GM12878 (cell line): ENCODE measurements at regions of chr4 and their contacts with region 1.

Region 1: GRCh38 chr4:4524364-4524763 is 17.5 kb downstream of the STX18 start:
- DNase-seq: peak; percentile 76
- ATAC-seq: peak; percentile 98
- H3K4me3 ChIP-seq: peak overlapping the region; percentile 42
- H3K27ac ChIP-seq: peak overlapping the region; percentile 76
- H3K4me1 ChIP-seq: peaks cover 30% of the 10 kb centered on the region
- H3K27me3 ChIP-seq: no peaks in the 10 kb centered on the region
- CTCF ChIP-seq: peak; percentile 37 to 44 (median 43); a peak in 5 of 6 replicates
- EP300 ChIP-seq: peak in 1 of 2 experiments; percentile 59; a peak in 1 of 4 replicates
- POLR2A ChIP-seq: no peak
- RAD21 ChIP-seq: peak; percentile 28; the same call in 1 of the 2 replicates

Region 2: GRCh38 chr4:4344915-4345527 is 179.3 kb before region 1 on chr4:
- CTCF ChIA-PET with region 1: no interaction called
- POLR2A ChIA-PET with region 1: no interaction called
- RAD21 ChIA-PET with region 1: no interaction called
- SMC1A ChIA-PET with region 1: no interaction called
- in situ Hi-C with region 1: no loop called
- intact Hi-C with region 1: no loop called
- DNase-seq: peak; percentile 49
- ATAC-seq: peak; percentile 91
- H3K4me3 ChIP-seq: no peak overlapping the region
- H3K27ac ChIP-seq: no peak overlapping the region
- H3K4me1 ChIP-seq: peaks cover 15% of the 10 kb centered on the region
- H3K27me3 ChIP-seq: no peaks in the 10 kb centered on the region
- CTCF ChIP-seq: no peak
- EP300 ChIP-seq: peak in 1 of 2 experiments; percentile 59; a peak in 2 of 4 replicates
- POLR2A ChIP-seq: no peak
- RAD21 ChIP-seq: no peak

Region 3: GRCh38 chr4:4502694-4503311 is 21.6 kb before region 1 on chr4:
- CTCF ChIA-PET with region 1: interaction called, 32 read pairs
- POLR2A ChIA-PET with region 1: interaction called, 9 read pairs
- RAD21 ChIA-PET with region 1: interaction called, 18 read pairs
- SMC1A ChIA-PET with region 1: interaction called, 31 read pairs
- in situ Hi-C with region 1: no loop called
- intact Hi-C with region 1: no loop called
- DNase-seq: no peak
- ATAC-seq: peak; percentile 90
- H3K4me3 ChIP-seq: peak overlapping the region; percentile 52
- H3K27ac ChIP-seq: peak overlapping the region; percentile 80
- H3K4me1 ChIP-seq: peaks cover 9% of the 10 kb centered on the region
- H3K27me3 ChIP-seq: no peaks in the 10 kb centered on the region
- CTCF ChIP-seq: no peak
- EP300 ChIP-seq: no peak
- POLR2A ChIP-seq: no peak; the same call in 1 of the 2 replicates
- RAD21 ChIP-seq: no peak

Region 4: GRCh38 chr4:4507923-4508322 is 16.4 kb before region 1 on chr4:
- CTCF ChIA-PET with region 1: interaction called, 32 read pairs
- POLR2A ChIA-PET with region 1: interaction called, 9 read pairs
- RAD21 ChIA-PET with region 1: interaction called, 18 read pairs
- SMC1A ChIA-PET with region 1: interaction called, 31 read pairs
- in situ Hi-C with region 1: no loop called
- intact Hi-C with region 1: no loop called
- DNase-seq: no peak
- ATAC-seq: peak; percentile 83
- H3K4me3 ChIP-seq: no peak overlapping the region
- H3K27ac ChIP-seq: no peak overlapping the region
- H3K4me1 ChIP-seq: peaks cover 3% of the 10 kb centered on the region; the same call in 1 of the 2 replicates
- H3K27me3 ChIP-seq: no peaks in the 10 kb centered on the region
- CTCF ChIP-seq: peak; percentile 37 to 56 (median 52); a peak in 5 of 6 replicates
- EP300 ChIP-seq: no peak
- POLR2A ChIP-seq: no peak
- RAD21 ChIP-seq: peak; percentile 28; the same call in 1 of the 2 replicates

Region 5: DNA sequence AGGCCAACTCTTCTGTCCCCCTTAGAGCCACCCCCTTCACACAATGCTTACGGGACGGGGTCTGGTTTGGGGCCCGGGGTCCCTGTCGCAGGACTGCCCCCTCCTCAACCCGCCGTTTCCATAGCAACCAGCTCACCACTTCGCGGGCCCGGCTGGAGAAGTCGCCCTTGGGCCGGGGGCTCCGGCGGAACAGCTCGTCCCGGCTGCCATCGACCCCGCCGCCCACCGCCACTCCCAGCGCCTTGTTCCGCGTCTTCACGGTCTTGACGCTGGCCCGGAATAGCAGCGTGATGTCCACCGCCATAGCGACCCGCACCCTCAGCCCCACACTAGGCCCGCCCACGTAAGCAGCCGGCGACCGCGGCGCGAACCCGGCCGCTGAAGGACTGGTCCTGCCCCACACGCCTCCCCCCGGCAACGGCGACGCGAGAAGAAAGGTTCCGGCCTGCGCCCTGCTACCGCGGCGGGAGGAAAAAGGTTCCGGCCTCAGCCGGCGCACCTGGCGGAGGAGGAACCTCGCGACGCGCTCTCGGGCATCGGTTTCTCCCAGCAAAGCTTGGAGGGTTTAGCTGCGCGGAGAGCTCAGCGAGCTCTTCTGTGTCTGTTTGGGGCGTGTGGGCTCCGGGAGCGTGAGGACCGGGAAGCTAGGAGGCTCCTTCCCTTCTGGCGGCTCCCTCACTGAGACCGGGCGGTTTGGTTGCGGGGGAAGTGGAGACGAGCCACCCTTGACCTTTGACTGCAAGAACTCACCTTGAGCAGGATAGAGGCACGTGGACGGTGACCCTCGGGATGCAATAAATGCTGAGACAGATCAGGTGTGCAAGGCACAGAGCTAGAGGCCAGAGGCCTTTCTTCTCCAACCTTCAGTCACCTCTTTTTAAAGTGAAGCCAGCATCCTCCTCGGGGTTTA is 17.6 kb after region 1 on chr4 and contains the start of gene STX18:
- CTCF ChIA-PET with region 1: interaction called, 134 read pairs
- POLR2A ChIA-PET with region 1: interaction called, 15 read pairs
- RAD21 ChIA-PET with region 1: interaction called, 47 read pairs
- SMC1A ChIA-PET with region 1: interaction called, 175 read pairs
- in situ Hi-C with region 1: no loop called
- intact Hi-C with region 1: no loop called
- DNase-seq: peak; percentile 48
- ATAC-seq: peak; percentile 92
- H3K4me3 ChIP-seq: peak within 1 kb of the TSS; percentile 80
- H3K27ac ChIP-seq: peak within 1 kb of the TSS; percentile 92
- H3K4me1 ChIP-seq: 0 out of 2 replicates have a peak, but pooled peaks cover 2% of the 10 kb centered on the region
- H3K27me3 ChIP-seq: no peaks in the 10 kb centered on the region
- CTCF ChIP-seq: no peak
- EP300 ChIP-seq: peak; percentile 43 to 45; a peak in 1 of 4 replicates
- POLR2A ChIP-seq: peak; percentile 96
- RAD21 ChIP-seq: 0 out of 2 replicates have a peak, but pooled peaks have one; percentile 13
- polyA plus RNA-seq, gene STX18: 8.2 to 13.6 TPM

Region 6: GRCh38 chr4:4575273-4576211 is 51.2 kb after region 1 on chr4:
- CTCF ChIA-PET with region 1: interaction called, 3 read pairs
- POLR2A ChIA-PET with region 1: no interaction called
- RAD21 ChIA-PET with region 1: no interaction called
- SMC1A ChIA-PET with region 1: interaction called, 10 read pairs
- in situ Hi-C with region 1: no loop called
- intact Hi-C with region 1: no loop called
- DNase-seq: peak; percentile 9
- ATAC-seq: peak; percentile 94
- H3K4me3 ChIP-seq: peak overlapping the region; percentile 76
- H3K27ac ChIP-seq: peak overlapping the region; percentile 24
- H3K4me1 ChIP-seq: peaks cover 5% of the 10 kb centered on the region
- H3K27me3 ChIP-seq: no peaks in the 10 kb centered on the region
- CTCF ChIP-seq: peak; percentile 25 to 41 (median 27); a peak in 2 of 6 replicates
- EP300 ChIP-seq: no peak
- POLR2A ChIP-seq: peak; percentile 61
- RAD21 ChIP-seq: 0 out of 2 replicates have a peak, but pooled peaks have one; percentile 19

Region 7: GRCh38 chr4:4697383-4698103 is 173.2 kb after region 1 on chr4:
- CTCF ChIA-PET with region 1: no interaction called
- POLR2A ChIA-PET with region 1: no interaction called
- RAD21 ChIA-PET with region 1: no interaction called
- SMC1A ChIA-PET with region 1: no interaction called
- in situ Hi-C with region 1: no loop called
- intact Hi-C with region 1: no loop called
- DNase-seq: no peak
- ATAC-seq: no peak
- H3K4me3 ChIP-seq: no peak overlapping the region
- H3K27ac ChIP-seq: no peak overlapping the region
- H3K4me1 ChIP-seq: 0 out of 2 replicates have a peak, but pooled peaks cover 3% of the 10 kb centered on the region
- H3K27me3 ChIP-seq: no peaks in the 10 kb centered on the region
- CTCF ChIP-seq: no peak
- EP300 ChIP-seq: no peak
- POLR2A ChIP-seq: no peak
- RAD21 ChIP-seq: no peak

Region 8: GRCh38 chr4:4709736-4710135 is 185.4 kb after region 1 on chr4:
- CTCF ChIA-PET with region 1: no interaction called
- POLR2A ChIA-PET with region 1: no interaction called
- RAD21 ChIA-PET with region 1: no interaction called
- SMC1A ChIA-PET with region 1: no interaction called
- in situ Hi-C with region 1: no loop called
- intact Hi-C with region 1: no loop called
- DNase-seq: no peak
- ATAC-seq: no peak
- H3K4me3 ChIP-seq: no peak overlapping the region
- H3K27ac ChIP-seq: no peak overlapping the region
- H3K4me1 ChIP-seq: no peaks in the 10 kb centered on the region
- H3K27me3 ChIP-seq: no peaks in the 10 kb centered on the region
- CTCF ChIP-seq: no peak
- EP300 ChIP-seq: no peak
- POLR2A ChIP-seq: no peak
- RAD21 ChIP-seq: no peak